OCI-LY7 (cell line): ENCODE measurements at regions of chr7 and their contacts with region 1.

Region 1: GRCh38 chr7:147197006-147197405 is 1080.4 kb downstream of the CNTNAP2 start:
- DNase-seq: no peak
- H3K4me3 ChIP-seq: no peak overlapping the region
- H3K27ac ChIP-seq: no peak overlapping the region
- H3K4me1 ChIP-seq: no peaks in the 10 kb centered on the region
- CTCF ChIP-seq: no peak

Region 2: DNA sequence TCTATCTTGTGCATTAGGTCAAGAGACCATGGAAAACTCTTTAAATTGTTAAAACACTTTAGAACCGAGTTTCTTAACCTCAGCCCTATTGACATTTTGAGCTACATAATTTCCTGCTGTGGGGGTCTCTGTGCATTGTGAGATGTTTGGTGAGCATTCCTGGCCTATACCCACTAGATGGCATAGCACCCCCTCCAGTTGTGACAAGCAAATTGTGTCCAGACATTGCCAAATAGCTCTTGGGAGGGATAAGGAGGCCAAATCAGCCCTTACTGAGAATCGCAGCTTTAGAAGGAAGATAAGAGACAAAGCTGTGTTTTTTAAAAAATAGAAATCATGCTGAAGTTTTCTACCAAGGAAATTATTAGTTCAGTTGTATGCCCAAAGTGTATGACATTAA is 235.1 kb after region 1 on chr7:
- CTCF ChIA-PET with region 1: no interaction called
- POLR2A ChIA-PET with region 1: interaction called, 10 read pairs
- intact Hi-C with region 1: no loop called
- DNase-seq: no peak
- H3K4me3 ChIP-seq: no peak overlapping the region
- H3K27ac ChIP-seq: no peak overlapping the region
- H3K4me1 ChIP-seq: no peaks in the 10 kb centered on the region
- CTCF ChIP-seq: 0 out of 2 replicates have a peak, but pooled peaks have one; percentile 29